GM12878 (cell line): ENCODE measurements at regions of chr13 and their contacts with region 1.

Region 1: DNA sequence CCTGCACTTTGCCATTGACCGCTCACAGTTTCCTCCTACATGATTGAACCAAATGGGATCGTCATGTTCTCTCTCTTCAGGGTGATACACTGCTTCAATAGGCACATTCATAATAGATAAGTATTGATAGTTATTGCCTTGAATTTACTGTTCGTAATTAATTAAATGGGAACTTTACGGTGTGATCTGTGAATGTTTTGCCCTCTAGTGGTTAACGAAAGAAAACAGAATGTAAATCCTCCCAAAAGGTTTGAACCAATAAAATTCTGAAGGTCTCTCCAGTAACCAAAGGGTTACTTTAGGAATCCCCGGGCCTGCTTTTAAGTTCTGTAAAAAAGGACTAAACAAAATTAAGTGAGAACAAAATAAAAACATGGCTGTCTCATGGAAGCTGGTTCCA is 389.3 kb downstream of the DACH1 start:
- DNase-seq: no peak
- ATAC-seq: no peak; the same call in 2 of the 3 replicates
- H3K4me3 ChIP-seq: no peak overlapping the region
- H3K27ac ChIP-seq: no peak overlapping the region
- H3K4me1 ChIP-seq: no peaks in the 10 kb centered on the region
- H3K27me3 ChIP-seq: no peaks in the 10 kb centered on the region
- CTCF ChIP-seq: peak; percentile 16 to 31 (median 26); a peak in 2 of 6 replicates
- EP300 ChIP-seq: no peak
- POLR2A ChIP-seq: no peak
- RAD21 ChIP-seq: no peak

Region 2: GRCh38 chr13:71240911-71241310 is 236.8 kb before region 1 on chr13:
- CTCF ChIA-PET with region 1: no interaction called
- POLR2A ChIA-PET with region 1: no interaction called
- RAD21 ChIA-PET with region 1: no interaction called
- SMC1A ChIA-PET with region 1: no interaction called
- in situ Hi-C with region 1: no loop called
- intact Hi-C with region 1: loop called (anchors 5 kb)
- DNase-seq: no peak
- ATAC-seq: peak; percentile 82
- H3K4me3 ChIP-seq: no peak overlapping the region
- H3K27ac ChIP-seq: no peak overlapping the region
- H3K4me1 ChIP-seq: no peaks in the 10 kb centered on the region
- H3K27me3 ChIP-seq: no peaks in the 10 kb centered on the region
- CTCF ChIP-seq: peak; percentile 24 to 52 (median 43); a peak in 4 of 6 replicates
- EP300 ChIP-seq: no peak
- POLR2A ChIP-seq: no peak
- RAD21 ChIP-seq: peak; percentile 55

Region 3: GRCh38 chr13:71285700-71286099 is 192.0 kb before region 1 on chr13:
- CTCF ChIA-PET with region 1: interaction called, 4 read pairs
- POLR2A ChIA-PET with region 1: no interaction called
- RAD21 ChIA-PET with region 1: no interaction called
- SMC1A ChIA-PET with region 1: no interaction called
- in situ Hi-C with region 1: no loop called
- intact Hi-C with region 1: loop called (anchors 5 kb)
- DNase-seq: no peak
- ATAC-seq: peak; percentile 77
- H3K4me3 ChIP-seq: no peak overlapping the region
- H3K27ac ChIP-seq: no peak overlapping the region
- H3K4me1 ChIP-seq: no peaks in the 10 kb centered on the region
- H3K27me3 ChIP-seq: no peaks in the 10 kb centered on the region
- CTCF ChIP-seq: peak; percentile 5 to 53 (median 36); a peak in 3 of 6 replicates
- EP300 ChIP-seq: no peak
- POLR2A ChIP-seq: no peak
- RAD21 ChIP-seq: peak; percentile 70

Region 4: GRCh38 chr13:71320452-71320851 is 157.3 kb before region 1 on chr13:
- CTCF ChIA-PET with region 1: interaction called, 3 read pairs
- POLR2A ChIA-PET with region 1: no interaction called
- RAD21 ChIA-PET with region 1: no interaction called
- SMC1A ChIA-PET with region 1: no interaction called
- in situ Hi-C with region 1: no loop called
- intact Hi-C with region 1: loop called (anchors 1 kb)
- DNase-seq: no peak
- ATAC-seq: peak; percentile 81
- H3K4me3 ChIP-seq: no peak overlapping the region
- H3K27ac ChIP-seq: no peak overlapping the region
- H3K4me1 ChIP-seq: no peaks in the 10 kb centered on the region
- H3K27me3 ChIP-seq: no peaks in the 10 kb centered on the region
- CTCF ChIP-seq: peak; percentile 55 to 64 (median 59)
- EP300 ChIP-seq: no peak
- POLR2A ChIP-seq: no peak
- RAD21 ChIP-seq: peak; percentile 74